ENCODE measurements at regions of chr4 and their contacts with region 1.

Region 1: DNA sequence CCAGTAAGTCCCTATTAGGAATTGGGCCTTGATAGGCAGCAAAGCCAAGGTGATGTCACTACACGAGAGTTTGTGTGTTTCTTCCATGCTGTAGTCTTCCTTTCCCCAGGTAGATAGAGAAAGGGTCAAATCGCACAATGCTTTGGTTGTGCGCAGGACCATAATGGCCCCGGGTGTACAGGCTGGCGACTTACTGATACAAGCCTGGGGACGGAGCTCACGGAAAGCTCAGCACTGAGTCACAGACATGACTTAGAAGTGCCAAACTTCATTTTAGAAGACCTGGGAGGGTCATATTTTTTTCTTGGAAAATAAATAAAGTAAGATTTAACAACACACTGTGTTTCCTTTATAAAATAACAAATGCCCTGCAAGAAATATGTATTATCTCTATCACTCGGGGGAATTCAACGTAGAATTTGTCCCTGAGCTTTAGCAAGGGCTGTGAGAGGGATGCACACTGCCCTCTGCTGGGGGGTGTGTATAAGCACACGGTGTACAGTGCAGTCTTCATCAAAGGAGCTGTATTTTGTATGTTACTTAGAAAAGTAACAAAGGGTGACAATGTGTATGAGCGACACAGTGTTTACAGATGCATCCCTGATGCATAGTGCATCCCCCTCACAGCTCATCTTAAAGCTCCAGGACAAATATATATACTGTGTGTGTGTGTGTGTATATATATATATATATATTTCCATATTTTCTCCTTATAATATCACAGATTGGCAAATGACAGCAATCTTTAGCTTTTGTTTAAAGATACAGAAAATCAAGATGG is 254.5 kb upstream of the VEGFC start:
- DNase-seq: no peak
- ATAC-seq: peak in 1 of 2 donors; percentile 58
- H3K4me3 ChIP-seq: no peak overlapping the region
- H3K27ac ChIP-seq: no peak overlapping the region
- H3K4me1 ChIP-seq: no peaks in the 10 kb centered on the region
- H3K27me3 ChIP-seq: no peaks in the 10 kb centered on the region
- CTCF ChIP-seq: peak in 4 of 5 experiments; percentile 30 to 68 (median 57)
- POLR2A ChIP-seq: no peak

Region 2: DNA sequence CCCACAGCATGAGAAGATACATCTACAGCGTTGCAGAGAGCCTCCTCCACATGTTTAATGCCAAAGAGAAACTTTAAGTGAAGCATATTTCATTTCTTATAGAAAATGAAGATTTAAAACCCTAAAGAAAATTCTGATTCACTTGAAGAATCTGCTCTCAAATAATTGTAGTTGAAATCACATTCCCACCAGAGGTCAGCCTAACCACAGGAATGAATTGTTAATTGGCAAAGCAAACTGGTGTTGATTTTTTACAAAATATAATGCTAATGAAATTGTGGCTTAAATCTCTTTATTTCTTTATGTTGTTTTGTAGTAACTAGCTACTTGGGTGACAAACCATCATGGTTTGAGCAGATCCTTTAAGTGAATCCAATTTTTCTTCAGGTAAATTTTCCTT is 1012.8 kb before region 1 on chr4:
- in situ Hi-C with region 1: no loop called
- intact Hi-C with region 1: loop called (anchors 10 kb)
- DNase-seq: no peak
- ATAC-seq: no peak
- H3K4me3 ChIP-seq: no peak overlapping the region
- H3K27ac ChIP-seq: no peak overlapping the region
- H3K4me1 ChIP-seq: no peaks in the 10 kb centered on the region
- H3K27me3 ChIP-seq: no peaks in the 10 kb centered on the region
- CTCF ChIP-seq: peak; percentile 13 to 38 (median 26)
- POLR2A ChIP-seq: no peak

Region 3: GRCh38 chr4:176377780-176378179 is 669.5 kb before region 1 on chr4:
- in situ Hi-C with region 1: loop called in 3 of 4 experiments (anchors 10 to 25 kb)
- intact Hi-C with region 1: no loop called
- DNase-seq: no peak
- ATAC-seq: no peak
- H3K4me3 ChIP-seq: no peak overlapping the region
- H3K27ac ChIP-seq: no peak overlapping the region
- H3K4me1 ChIP-seq: no peaks in the 10 kb centered on the region
- H3K27me3 ChIP-seq: no peaks in the 10 kb centered on the region
- CTCF ChIP-seq: peak in 4 of 5 experiments; percentile 18 to 30 (median 24)
- POLR2A ChIP-seq: no peak